WTC11 (cell line): ENCODE measurements at regions of chr14 and their contacts with region 1.

Region 1: GRCh38 chr14:78157494-78158456 is 12.4 kb upstream of the NRXN3 start:
- DNase-seq: peak; percentile 57
- ATAC-seq: no peak
- H3K4me3 Mint-ChIP-seq: no peak overlapping the region
- H3K27ac Mint-ChIP-seq: no peak overlapping the region
- H3K4me1 Mint-ChIP-seq: peaks cover 30% of the 10 kb centered on the region
- H3K27me3 Mint-ChIP-seq: no peaks in the 10 kb centered on the region; the same call in 1 of the 2 replicates
- CTCF ChIP-seq: no peak

Region 2: GRCh38 chr14:78022059-78022458 is 135.7 kb before region 1 on chr14:
- CTCF ChIA-PET with region 1: interaction called, 14 read pairs
- POLR2A ChIA-PET with region 1: no interaction called
- DNase-seq: peak; percentile 89
- ATAC-seq: peak; percentile 98
- H3K4me3 Mint-ChIP-seq: no peak overlapping the region
- H3K27ac Mint-ChIP-seq: no peak overlapping the region
- H3K4me1 Mint-ChIP-seq: peaks cover 10% of the 10 kb centered on the region; the same call in 1 of the 2 replicates
- H3K27me3 Mint-ChIP-seq: no peaks in the 10 kb centered on the region
- CTCF ChIP-seq: peak; percentile 79

Region 3: DNA sequence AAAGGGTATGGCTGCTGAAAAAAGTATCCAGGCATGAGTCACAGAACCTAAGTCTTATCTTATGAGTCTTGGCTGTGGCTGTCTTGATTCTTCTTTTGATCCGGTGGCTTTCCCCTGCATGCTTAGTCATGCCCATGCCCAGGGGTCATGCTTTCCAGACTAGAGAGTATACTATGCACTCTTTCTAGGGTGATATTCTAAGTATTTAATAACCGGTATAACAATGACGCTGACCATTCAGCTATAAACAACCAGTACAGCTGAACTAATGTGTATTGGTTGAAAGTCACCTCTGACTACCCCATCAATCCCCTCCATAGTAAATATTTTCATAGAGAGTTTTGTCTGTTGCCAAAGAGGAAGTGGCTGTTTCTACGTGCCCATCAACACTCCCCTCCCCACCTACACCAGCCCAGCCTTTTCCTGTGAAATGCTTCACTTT is 22.3 kb before region 1 on chr14:
- CTCF ChIA-PET with region 1: no interaction called
- POLR2A ChIA-PET with region 1: no interaction called
- DNase-seq: no peak
- ATAC-seq: no peak
- H3K4me3 Mint-ChIP-seq: no peak overlapping the region
- H3K27ac Mint-ChIP-seq: no peak overlapping the region
- H3K4me1 Mint-ChIP-seq: no peaks in the 10 kb centered on the region; the same call in 1 of the 2 replicates
- H3K27me3 Mint-ChIP-seq: no peaks in the 10 kb centered on the region
- CTCF ChIP-seq: no peak

Region 4: DNA sequence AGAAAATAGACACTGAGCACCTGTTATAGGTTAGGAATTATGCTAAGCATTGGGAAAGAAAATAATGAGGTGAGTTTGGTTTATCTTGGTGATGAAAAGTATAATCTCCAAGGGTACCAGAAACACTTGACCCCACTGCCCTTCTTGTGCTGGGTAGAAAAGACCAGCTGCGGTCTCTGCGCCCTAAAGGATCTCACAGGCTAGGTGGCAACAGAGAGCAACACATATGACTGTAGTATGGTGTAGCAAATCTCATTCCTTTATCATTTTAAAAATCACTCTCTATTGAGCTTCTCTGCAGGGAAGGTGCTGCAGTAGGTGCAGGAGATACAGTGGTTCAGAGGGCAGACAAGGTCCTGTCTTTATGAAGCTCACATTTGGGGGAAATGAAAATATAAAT is 38.5 kb after region 1 on chr14:
- CTCF ChIA-PET with region 1: no interaction called
- POLR2A ChIA-PET with region 1: no interaction called
- DNase-seq: no peak
- ATAC-seq: peak; percentile 24; the same call in 1 of the 2 replicates
- H3K4me3 Mint-ChIP-seq: no peak overlapping the region
- H3K27ac Mint-ChIP-seq: no peak overlapping the region
- H3K4me1 Mint-ChIP-seq: peaks cover 9% of the 10 kb centered on the region; the same call in 1 of the 2 replicates
- H3K27me3 Mint-ChIP-seq: no peaks in the 10 kb centered on the region
- CTCF ChIP-seq: no peak